GM12878 (cell line): ENCODE measurements at regions of chr11 and their contacts with region 1.

Region 1: GRCh38 chr11:128497061-128497775 is 90.1 kb downstream of the ETS1 start:
- DNase-seq: peak; percentile 87
- ATAC-seq: peak; percentile 90
- H3K4me3 ChIP-seq: peak overlapping the region; percentile 47
- H3K27ac ChIP-seq: peak overlapping the region; percentile 88
- H3K4me1 ChIP-seq: peaks cover 72% of the 10 kb centered on the region
- H3K27me3 ChIP-seq: no peaks in the 10 kb centered on the region
- CTCF ChIP-seq: no peak
- EP300 ChIP-seq: peak in 1 of 2 experiments; percentile 56; a peak in 2 of 4 replicates
- POLR2A ChIP-seq: peak; percentile 53; the same call in 1 of the 2 replicates
- RAD21 ChIP-seq: 0 out of 2 replicates have a peak, but pooled peaks have one; percentile 4

Region 2: GRCh38 chr11:128105950-128106349 is 391.3 kb before region 1 on chr11:
- CTCF ChIA-PET with region 1: no interaction called
- POLR2A ChIA-PET with region 1: no interaction called
- RAD21 ChIA-PET with region 1: no interaction called
- SMC1A ChIA-PET with region 1: no interaction called
- in situ Hi-C with region 1: no loop called
- intact Hi-C with region 1: no loop called
- DNase-seq: no peak
- ATAC-seq: no peak
- H3K4me3 ChIP-seq: no peak overlapping the region
- H3K27ac ChIP-seq: no peak overlapping the region
- H3K4me1 ChIP-seq: no peaks in the 10 kb centered on the region
- H3K27me3 ChIP-seq: no peaks in the 10 kb centered on the region
- CTCF ChIP-seq: no peak
- EP300 ChIP-seq: no peak
- POLR2A ChIP-seq: no peak
- RAD21 ChIP-seq: no peak

Region 3: GRCh38 chr11:128399251-128400121 is 97.7 kb before region 1 on chr11:
- CTCF ChIA-PET with region 1: no interaction called
- POLR2A ChIA-PET with region 1: no interaction called
- RAD21 ChIA-PET with region 1: no interaction called
- SMC1A ChIA-PET with region 1: no interaction called
- in situ Hi-C with region 1: no loop called
- intact Hi-C with region 1: no loop called
- DNase-seq: peak; percentile 26
- ATAC-seq: peak; percentile 93
- H3K4me3 ChIP-seq: no peak overlapping the region
- H3K27ac ChIP-seq: no peak overlapping the region; the same call in 1 of the 2 replicates
- H3K4me1 ChIP-seq: peaks cover 8% of the 10 kb centered on the region
- H3K27me3 ChIP-seq: no peaks in the 10 kb centered on the region
- CTCF ChIP-seq: no peak
- EP300 ChIP-seq: 0 out of 4 replicates have a peak, but pooled peaks of 1 of the 2 experiments have one; percentile 31
- POLR2A ChIP-seq: no peak
- RAD21 ChIP-seq: no peak

Region 4: GRCh38 chr11:128482512-128483191 is 14.6 kb before region 1 on chr11:
- CTCF ChIA-PET with region 1: interaction called, 19 read pairs
- POLR2A ChIA-PET with region 1: interaction called, 16 read pairs
- RAD21 ChIA-PET with region 1: interaction called, 6 read pairs
- SMC1A ChIA-PET with region 1: interaction called, 17 read pairs
- in situ Hi-C with region 1: no loop called
- intact Hi-C with region 1: loop called (anchors 1 kb)
- DNase-seq: no peak
- ATAC-seq: peak; percentile 81
- H3K4me3 ChIP-seq: peak overlapping the region; percentile 37
- H3K27ac ChIP-seq: peak overlapping the region; percentile 97
- H3K4me1 ChIP-seq: peaks cover 42% of the 10 kb centered on the region
- H3K27me3 ChIP-seq: no peaks in the 10 kb centered on the region
- CTCF ChIP-seq: no peak
- EP300 ChIP-seq: peak in 1 of 2 experiments; percentile 44; a peak in 1 of 4 replicates
- POLR2A ChIP-seq: peak; percentile 64
- RAD21 ChIP-seq: 0 out of 2 replicates have a peak, but pooled peaks have one; percentile 1

Region 5: GRCh38 chr11:128512474-128512996 is 15.3 kb after region 1 on chr11:
- CTCF ChIA-PET with region 1: interaction called, 7 read pairs
- POLR2A ChIA-PET with region 1: interaction called, 23 read pairs
- RAD21 ChIA-PET with region 1: interaction called, 32 read pairs
- SMC1A ChIA-PET with region 1: interaction called, 82 read pairs
- in situ Hi-C with region 1: no loop called
- intact Hi-C with region 1: no loop called
- DNase-seq: no peak
- ATAC-seq: no peak
- H3K4me3 ChIP-seq: no peak overlapping the region
- H3K27ac ChIP-seq: no peak overlapping the region
- H3K4me1 ChIP-seq: peaks cover 27% of the 10 kb centered on the region
- H3K27me3 ChIP-seq: no peaks in the 10 kb centered on the region
- CTCF ChIP-seq: no peak
- EP300 ChIP-seq: no peak
- POLR2A ChIP-seq: peak; percentile 64
- RAD21 ChIP-seq: no peak

Region 6: DNA sequence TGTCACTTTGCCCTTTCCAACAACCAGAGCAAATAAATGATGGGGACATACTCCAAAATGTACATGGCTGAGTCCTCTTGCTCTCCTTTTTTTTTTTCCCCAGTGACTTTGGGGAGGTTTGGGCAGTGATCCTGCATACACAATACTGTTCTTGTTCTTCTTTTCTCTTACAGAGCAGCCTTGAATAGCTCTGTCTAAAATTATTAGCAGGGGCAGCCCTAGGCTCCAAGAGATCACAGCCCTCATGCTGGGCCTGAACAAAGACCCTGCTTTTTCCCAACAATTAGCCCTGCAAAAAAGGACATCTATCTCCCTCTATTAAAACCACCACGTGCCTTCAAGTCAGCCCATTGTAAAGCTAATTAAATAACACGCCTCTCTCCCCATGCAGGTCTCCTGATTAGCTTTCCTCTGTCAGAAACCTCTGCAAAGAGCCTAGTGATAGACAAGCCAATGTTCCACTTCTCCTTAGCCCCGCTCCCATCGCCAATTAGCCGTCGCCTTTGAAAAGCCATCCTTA is 35.4 kb after region 1 on chr11:
- CTCF ChIA-PET with region 1: no interaction called
- POLR2A ChIA-PET with region 1: no interaction called
- RAD21 ChIA-PET with region 1: no interaction called
- SMC1A ChIA-PET with region 1: no interaction called
- in situ Hi-C with region 1: no loop called
- intact Hi-C with region 1: no loop called
- DNase-seq: no peak
- ATAC-seq: no peak
- H3K4me3 ChIP-seq: no peak overlapping the region
- H3K27ac ChIP-seq: no peak overlapping the region
- H3K4me1 ChIP-seq: no peaks in the 10 kb centered on the region
- H3K27me3 ChIP-seq: no peaks in the 10 kb centered on the region
- CTCF ChIP-seq: no peak
- EP300 ChIP-seq: no peak
- POLR2A ChIP-seq: no peak
- RAD21 ChIP-seq: no peak